T-cell (primary cell): ENCODE measurements at regions of chr2 and their contacts with region 1.

Region 1: DNA sequence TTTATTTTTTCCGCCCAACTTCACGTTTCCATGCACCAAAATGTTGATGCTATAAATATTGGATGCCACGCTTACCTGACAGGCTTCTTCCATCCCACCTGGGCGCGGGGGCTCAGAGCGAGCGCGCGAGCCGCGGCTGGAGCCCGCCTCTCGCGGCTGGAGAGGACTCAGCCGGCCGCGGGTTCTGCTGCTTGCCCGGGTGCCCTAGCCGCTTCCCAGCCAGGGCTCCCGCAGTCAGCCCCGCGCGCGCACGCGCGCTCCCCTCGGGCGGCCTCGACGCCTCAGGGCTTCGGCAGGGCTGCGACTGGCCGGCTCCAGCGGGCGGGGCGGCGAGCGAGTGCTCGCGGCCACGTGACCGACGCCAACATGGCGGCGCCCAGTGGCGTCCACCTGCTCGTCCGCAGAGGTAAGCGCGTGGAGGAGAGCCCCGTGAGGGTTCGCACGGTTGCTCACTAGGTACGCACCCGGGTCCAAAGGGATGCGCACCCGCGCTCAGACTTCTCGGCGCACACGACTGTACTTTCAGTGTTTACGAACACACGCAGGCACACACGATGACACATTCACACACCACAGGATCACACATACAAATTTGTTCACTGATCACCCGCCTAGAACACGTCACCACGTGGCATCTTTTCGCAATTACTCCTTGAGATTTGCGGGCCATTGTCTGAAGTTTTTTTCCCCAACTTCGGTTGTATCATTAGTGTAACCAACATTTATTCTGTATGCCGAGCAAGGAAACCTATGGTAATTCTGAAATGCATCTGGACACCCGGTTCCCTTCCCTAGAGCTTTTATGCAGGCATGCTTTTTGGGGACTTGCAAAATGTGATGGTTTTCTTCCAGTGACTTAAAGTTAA is at the start of gene METAP1D:
- DNase-seq: peak; percentile 62 to 87 (median 74)
- ATAC-seq: peak; percentile 95 to 96 (median 96)
- H3K4me3 ChIP-seq: peak within 1 kb of the TSS; percentile 81 to 94
- H3K4me3 Mint-ChIP-seq: peak within 1 kb of the TSS; percentile 87 to 91 (median 90)
- H3K27ac ChIP-seq: peak within 1 kb of the TSS; percentile 42
- H3K27ac Mint-ChIP-seq: peak within 1 kb of the TSS; percentile 91 to 93
- H3K4me1 ChIP-seq: peaks cover 7 to 11% of the 10 kb centered on the region in 2 experiments
- H3K4me1 Mint-ChIP-seq: peaks cover 17 to 20% (median 19%) of the 10 kb centered on the region in 3 donors
- H3K27me3 ChIP-seq: peaks cover 0 to 10% of the 10 kb centered on the region in 2 experiments
- H3K27me3 Mint-ChIP-seq: peaks cover 6 to 7% of the 10 kb centered on the region in 2 donors
- total RNA-seq, gene METAP1D: 7.6 to 11.4 (median 10.1) TPM

Region 2: GRCh38 chr2:171703574-171704347 is 296.1 kb before region 1 on chr2:
- CTCF ChIA-PET with region 1: no interaction called
- POLR2A ChIA-PET with region 1: no interaction called
- DNase-seq: peak in 3 of 35 experiments; percentile 2 to 58 (median 6)
- ATAC-seq: no peak
- H3K4me3 ChIP-seq: no peak overlapping the region
- H3K4me3 Mint-ChIP-seq: no peak overlapping the region
- H3K27ac ChIP-seq: no peak overlapping the region
- H3K27ac Mint-ChIP-seq: peak overlapping the region; percentile 12 to 52
- H3K4me1 ChIP-seq: peaks cover 0 to 4% of the 10 kb centered on the region in 2 experiments
- H3K4me1 Mint-ChIP-seq: peaks cover 8 to 13% (median 10%) of the 10 kb centered on the region in 3 donors
- H3K27me3 ChIP-seq: no peaks in the 10 kb centered on the region
- H3K27me3 Mint-ChIP-seq: no peaks in the 10 kb centered on the region

Region 3: GRCh38 chr2:171852366-171852888 is 147.4 kb before region 1 on chr2:
- CTCF ChIA-PET with region 1: interaction called in 1 of 2 experiments, 10 read pairs
- POLR2A ChIA-PET with region 1: no interaction called
- DNase-seq: no peak
- ATAC-seq: no peak
- H3K4me3 ChIP-seq: no peak overlapping the region
- H3K4me3 Mint-ChIP-seq: no peak overlapping the region
- H3K27ac ChIP-seq: no peak overlapping the region
- H3K27ac Mint-ChIP-seq: no peak overlapping the region
- H3K4me1 ChIP-seq: no peaks in the 10 kb centered on the region
- H3K4me1 Mint-ChIP-seq: no peaks in the 10 kb centered on the region
- H3K27me3 ChIP-seq: no peaks in the 10 kb centered on the region
- H3K27me3 Mint-ChIP-seq: no peaks in the 10 kb centered on the region